ENCODE measurements at regions of chr16 and their contacts with region 1.

Region 1: GRCh38 chr16:23423496-23424049 is 29.4 kb downstream of the COG7 start:
- DNase-seq: peak; percentile 100
- H3K4me3 ChIP-seq: no peak overlapping the region
- H3K27ac ChIP-seq: peak overlapping the region; percentile 96
- H3K4me1 ChIP-seq: peaks cover 24% of the 10 kb centered on the region
- H3K27me3 ChIP-seq: no peaks in the 10 kb centered on the region
- CTCF ChIP-seq: no peak
- POLR2A ChIP-seq: no peak

Region 2: DNA sequence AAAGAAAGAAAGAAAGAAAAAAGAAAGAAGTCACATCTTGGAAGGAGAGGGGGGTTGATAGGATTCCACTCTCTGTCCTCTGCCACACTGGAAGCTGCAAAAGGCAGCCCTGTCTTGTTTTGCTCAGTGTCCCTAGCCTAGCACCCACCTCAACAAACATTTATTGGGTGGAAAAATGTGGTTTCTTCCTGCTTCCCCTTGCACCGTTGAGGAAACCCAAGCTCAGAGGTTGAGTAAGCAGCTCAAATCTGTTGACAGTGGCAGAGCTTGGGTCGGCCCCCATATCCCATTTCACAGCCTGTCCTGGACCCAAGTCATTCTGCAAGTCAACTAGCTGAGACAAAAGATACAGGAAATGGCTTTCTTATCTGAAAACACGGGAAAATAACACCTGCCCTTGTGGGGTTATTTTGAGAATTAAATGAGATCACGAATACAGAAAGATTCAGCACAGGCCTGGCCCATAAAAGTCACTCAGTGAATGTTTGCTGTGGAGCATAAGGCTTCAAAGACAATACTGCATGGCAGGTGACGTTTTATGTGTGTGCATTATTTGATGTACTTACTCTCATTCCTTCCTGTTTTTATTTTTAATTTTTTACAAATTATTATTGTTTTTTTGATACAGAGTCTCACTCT is 57.9 kb before region 1 on chr16:
- CTCF ChIA-PET with region 1: no interaction called
- POLR2A ChIA-PET with region 1: no interaction called
- dilution Hi-C with region 1: no loop called
- intact Hi-C with region 1: loop called (anchors 1 kb)
- DNase-seq: peak; percentile 85
- H3K4me3 ChIP-seq: no peak overlapping the region
- H3K27ac ChIP-seq: no peak overlapping the region
- H3K4me1 ChIP-seq: peaks cover 4% of the 10 kb centered on the region
- H3K27me3 ChIP-seq: no peaks in the 10 kb centered on the region
- CTCF ChIP-seq: no peak
- POLR2A ChIP-seq: no peak

Region 3: GRCh38 chr16:23408823-23409298 is 14.7 kb before region 1 on chr16:
- CTCF ChIA-PET with region 1: interaction called, 6 read pairs
- POLR2A ChIA-PET with region 1: no interaction called
- dilution Hi-C with region 1: no loop called
- intact Hi-C with region 1: loop called (anchors 2 kb)
- DNase-seq: no peak
- H3K4me3 ChIP-seq: no peak overlapping the region
- H3K27ac ChIP-seq: no peak overlapping the region
- H3K4me1 ChIP-seq: peaks cover 3% of the 10 kb centered on the region
- H3K27me3 ChIP-seq: no peaks in the 10 kb centered on the region
- CTCF ChIP-seq: no peak
- POLR2A ChIP-seq: no peak

Region 4: DNA sequence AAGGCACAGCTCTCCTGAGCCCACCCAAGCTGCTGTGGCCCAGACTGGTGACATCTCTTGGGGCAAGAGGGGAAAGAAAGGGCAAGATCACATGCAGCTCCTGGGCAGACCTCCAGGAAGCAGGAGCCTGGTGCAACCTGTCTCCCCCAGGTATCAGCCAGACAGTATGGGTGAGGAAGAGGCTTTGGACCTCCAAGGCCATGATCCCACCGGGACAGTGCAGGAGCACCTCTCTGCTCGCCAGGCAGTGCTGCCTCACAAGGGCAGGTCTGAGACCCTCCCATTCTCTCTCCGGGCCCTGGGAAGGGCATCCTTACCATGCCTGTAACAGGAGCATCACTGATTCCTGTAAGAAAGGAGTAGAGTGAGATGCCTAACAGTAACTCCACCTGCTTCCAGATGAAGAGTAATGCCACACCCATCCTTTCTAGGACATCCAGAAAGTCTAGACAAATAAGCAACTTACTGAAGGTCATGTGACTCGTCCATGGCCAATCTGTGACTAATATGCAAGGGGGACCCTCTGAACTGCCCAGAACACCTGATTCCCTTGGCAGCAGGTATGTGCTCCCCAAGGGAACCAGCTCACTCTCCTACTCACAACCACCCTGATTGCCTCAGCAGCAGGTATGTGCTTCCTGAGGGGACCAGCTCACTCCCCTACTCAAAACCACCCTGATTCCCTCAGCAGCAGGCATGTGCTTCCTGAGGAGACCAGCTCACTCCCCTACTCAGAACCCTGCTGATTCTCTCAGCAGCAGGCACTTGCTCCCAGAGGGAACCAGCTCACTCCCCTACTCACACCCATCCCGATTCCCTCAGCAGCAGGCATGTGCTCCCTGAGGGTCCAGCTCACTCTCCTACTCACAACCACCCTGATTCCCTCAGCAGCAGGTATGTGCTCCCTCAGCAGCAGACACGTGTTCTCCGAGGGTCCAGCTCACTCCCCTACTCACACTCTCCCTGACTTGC is 55.3 kb after region 1 on chr16:
- CTCF ChIA-PET with region 1: no interaction called
- POLR2A ChIA-PET with region 1: no interaction called
- dilution Hi-C with region 1: no loop called
- intact Hi-C with region 1: no loop called
- DNase-seq: no peak
- H3K4me3 ChIP-seq: no peak overlapping the region
- H3K27ac ChIP-seq: no peak overlapping the region
- H3K4me1 ChIP-seq: no peaks in the 10 kb centered on the region
- H3K27me3 ChIP-seq: no peaks in the 10 kb centered on the region
- CTCF ChIP-seq: no peak
- POLR2A ChIP-seq: no peak

Region 5: GRCh38 chr16:23491490-23492391 is 68.2 kb after region 1 on chr16:
- CTCF ChIA-PET with region 1: no interaction called
- POLR2A ChIA-PET with region 1: no interaction called
- dilution Hi-C with region 1: no loop called
- intact Hi-C with region 1: no loop called
- DNase-seq: peak; percentile 39
- H3K4me3 ChIP-seq: no peak overlapping the region
- H3K27ac ChIP-seq: peak overlapping the region; percentile 46
- H3K4me1 ChIP-seq: peaks cover 25% of the 10 kb centered on the region
- H3K27me3 ChIP-seq: no peaks in the 10 kb centered on the region
- CTCF ChIP-seq: no peak
- POLR2A ChIP-seq: no peak